ENCODE measurements at regions of chr1 and their contacts with region 1.

Region 1: GRCh38 chr1:214328770-214329469 is 48.0 kb downstream of the SMYD2 start:
- DNase-seq: peak; percentile 77
- H3K4me3 ChIP-seq: no peak overlapping the region
- H3K27ac ChIP-seq: no peak overlapping the region
- H3K4me1 ChIP-seq: peaks cover 7% of the 10 kb centered on the region
- H3K27me3 ChIP-seq: no peaks in the 10 kb centered on the region
- CTCF ChIP-seq: peak; percentile 85 to 94

Region 2: GRCh38 chr1:213244664-213245091 is 1084.2 kb before region 1 on chr1:
- CTCF ChIA-PET with region 1: no interaction called
- dilution Hi-C with region 1: no loop called
- in situ Hi-C with region 1: no loop called
- intact Hi-C with region 1: loop called (anchors 2 kb)
- DNase-seq: peak; percentile 14
- H3K4me3 ChIP-seq: no peak overlapping the region
- H3K27ac ChIP-seq: no peak overlapping the region
- H3K4me1 ChIP-seq: no peaks in the 10 kb centered on the region
- H3K27me3 ChIP-seq: no peaks in the 10 kb centered on the region
- CTCF ChIP-seq: peak; percentile 65 to 67

Region 3: DNA sequence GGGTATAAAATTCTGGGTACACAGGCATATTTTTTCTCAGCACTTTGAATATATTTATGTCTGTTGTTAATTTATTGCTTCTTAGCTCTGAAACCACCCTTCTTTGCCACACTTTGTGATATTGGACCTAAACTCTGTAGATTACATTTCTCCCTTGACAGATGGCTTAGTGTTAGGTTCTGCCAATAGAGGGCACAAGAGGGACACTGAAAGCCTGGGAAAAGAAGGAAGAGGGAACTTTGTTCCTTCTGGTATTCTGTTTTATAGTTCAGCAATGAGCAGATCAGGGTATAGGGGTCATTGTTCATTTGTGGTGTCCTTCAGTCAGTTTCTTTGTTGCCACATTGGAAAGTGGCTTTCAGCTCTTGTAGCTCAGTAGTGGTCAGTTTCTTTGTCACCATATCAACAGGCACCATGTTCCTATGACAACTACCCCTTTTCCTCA is 764.7 kb before region 1 on chr1:
- CTCF ChIA-PET with region 1: no interaction called
- dilution Hi-C with region 1: no loop called
- in situ Hi-C with region 1: no loop called
- intact Hi-C with region 1: loop called (anchors 1 kb)
- DNase-seq: peak; percentile 34
- H3K4me3 ChIP-seq: no peak overlapping the region
- H3K27ac ChIP-seq: no peak overlapping the region
- H3K4me1 ChIP-seq: no peaks in the 10 kb centered on the region
- H3K27me3 ChIP-seq: no peaks in the 10 kb centered on the region
- CTCF ChIP-seq: peak; percentile 78 to 82

Region 4: DNA sequence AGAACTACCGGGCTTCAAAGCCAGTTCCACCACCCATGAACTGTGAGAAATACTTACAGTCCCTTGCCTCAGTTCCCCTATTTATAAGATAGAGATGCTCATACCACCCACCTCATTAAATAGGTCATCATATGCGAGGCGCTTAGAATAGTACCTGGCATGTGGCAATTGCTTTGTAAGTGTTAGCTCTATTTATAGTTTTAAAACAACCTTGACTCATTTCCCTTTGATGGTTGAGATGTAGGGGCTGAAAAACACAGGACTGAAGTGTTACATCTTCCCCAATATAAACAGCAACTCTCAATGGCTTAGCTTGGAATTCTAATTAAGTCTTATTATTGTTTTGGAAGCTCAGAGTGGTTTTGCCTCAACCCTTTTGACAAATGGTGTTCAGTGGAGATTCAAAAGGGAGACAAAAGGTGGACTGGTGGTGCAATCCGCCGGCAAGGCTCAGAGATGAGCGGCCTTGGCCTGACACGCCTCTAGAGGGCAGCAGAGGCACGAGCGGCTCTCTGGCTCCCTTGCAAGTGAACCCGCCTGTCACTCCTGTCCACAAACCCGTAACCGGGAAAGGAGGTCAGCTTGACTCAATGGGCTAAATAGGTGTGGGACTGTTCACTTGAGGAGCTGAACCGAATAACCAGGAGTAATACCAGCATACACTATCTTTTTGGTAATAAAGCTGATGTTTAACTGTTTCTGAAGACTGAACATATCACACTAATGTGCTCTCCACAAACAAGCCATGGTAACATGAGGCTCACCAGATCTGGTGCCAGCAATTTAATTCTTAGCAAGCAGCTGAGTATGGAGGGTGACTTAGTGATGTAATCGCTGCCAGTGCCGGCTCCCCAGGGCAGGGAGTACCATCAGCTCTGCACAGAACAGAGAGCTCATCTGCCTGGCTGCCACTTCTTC is 67.5 kb before region 1 on chr1:
- CTCF ChIA-PET with region 1: interaction called, 3 read pairs
- dilution Hi-C with region 1: no loop called
- in situ Hi-C with region 1: loop called in 1 of 2 experiments (anchors 10 kb)
- intact Hi-C with region 1: loop called (anchors 1 kb)
- DNase-seq: peak; percentile 62
- H3K4me3 ChIP-seq: no peak overlapping the region
- H3K27ac ChIP-seq: no peak overlapping the region
- H3K4me1 ChIP-seq: peaks cover 14% of the 10 kb centered on the region
- H3K27me3 ChIP-seq: no peaks in the 10 kb centered on the region
- CTCF ChIP-seq: peak; percentile 96 to 97

Region 5: GRCh38 chr1:214362188-214362882 is 33.4 kb after region 1 on chr1:
- CTCF ChIA-PET with region 1: no interaction called
- dilution Hi-C with region 1: no loop called
- in situ Hi-C with region 1: no loop called
- intact Hi-C with region 1: no loop called
- DNase-seq: no peak
- H3K4me3 ChIP-seq: no peak overlapping the region
- H3K27ac ChIP-seq: no peak overlapping the region
- H3K4me1 ChIP-seq: peaks cover 5% of the 10 kb centered on the region
- H3K27me3 ChIP-seq: no peaks in the 10 kb centered on the region
- CTCF ChIP-seq: no peak

Region 6: GRCh38 chr1:214584805-214585766 is 256.2 kb after region 1 on chr1:
- CTCF ChIA-PET with region 1: interaction called, 6 read pairs
- dilution Hi-C with region 1: no loop called
- in situ Hi-C with region 1: no loop called
- intact Hi-C with region 1: loop called (anchors 1 kb)
- DNase-seq: peak; percentile 64
- H3K4me3 ChIP-seq: no peak overlapping the region
- H3K27ac ChIP-seq: peak overlapping the region; percentile 54
- H3K4me1 ChIP-seq: peaks cover 39% of the 10 kb centered on the region
- H3K27me3 ChIP-seq: no peaks in the 10 kb centered on the region
- CTCF ChIP-seq: peak; percentile 79 to 98

Region 7: GRCh38 chr1:214632091-214632490 is 303.2 kb after region 1 on chr1:
- CTCF ChIA-PET with region 1: no interaction called
- dilution Hi-C with region 1: no loop called
- in situ Hi-C with region 1: no loop called
- intact Hi-C with region 1: loop called (anchors 1 kb)
- DNase-seq: no peak
- H3K4me3 ChIP-seq: no peak overlapping the region
- H3K27ac ChIP-seq: no peak overlapping the region
- H3K4me1 ChIP-seq: no peaks in the 10 kb centered on the region
- H3K27me3 ChIP-seq: no peaks in the 10 kb centered on the region
- CTCF ChIP-seq: no peak